Colonic mucosa (tissue), 4 donors: ENCODE measurements at regions of chr13 and their contacts with region 1.

Region 1: GRCh38 chr13:75864718-75865117 is 228.6 kb downstream of the LMO7 start:
- DNase-seq: no peak
- H3K4me3 ChIP-seq: no peak overlapping the region
- H3K27ac ChIP-seq: no peak overlapping the region
- H3K4me1 ChIP-seq: no peaks in the 10 kb centered on the region
- H3K27me3 ChIP-seq: no peaks in the 10 kb centered on the region
- CTCF ChIP-seq: no peak

Region 2: DNA sequence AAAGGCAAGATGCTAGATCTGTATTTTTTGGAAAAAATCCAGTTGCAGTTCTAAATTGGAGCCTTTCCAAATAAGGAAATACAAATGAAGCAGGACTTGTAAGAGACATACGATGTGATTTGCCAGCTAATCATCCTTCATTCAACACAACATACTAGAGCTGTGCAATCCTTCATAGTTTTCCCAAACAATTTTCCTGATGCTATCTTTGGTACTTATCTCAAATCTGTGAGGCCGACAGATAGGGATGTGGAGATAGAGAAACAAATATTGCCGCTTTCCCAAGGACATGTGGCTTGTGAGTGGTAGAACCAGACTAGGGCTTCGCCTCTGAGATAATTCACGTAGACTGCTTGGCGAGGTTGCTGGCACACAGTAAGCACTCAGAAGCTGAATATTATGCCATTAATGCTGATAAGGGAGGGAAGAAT is 52.0 kb before region 1 on chr13:
- intact Hi-C with region 1: loop called (anchors 10 kb)
- DNase-seq: no peak
- H3K4me3 ChIP-seq: no peak overlapping the region
- H3K27ac ChIP-seq: no peak overlapping the region
- H3K4me1 ChIP-seq: no peaks in the 10 kb centered on the region
- H3K27me3 ChIP-seq: no peaks in the 10 kb centered on the region
- CTCF ChIP-seq: no peak

Region 3: DNA sequence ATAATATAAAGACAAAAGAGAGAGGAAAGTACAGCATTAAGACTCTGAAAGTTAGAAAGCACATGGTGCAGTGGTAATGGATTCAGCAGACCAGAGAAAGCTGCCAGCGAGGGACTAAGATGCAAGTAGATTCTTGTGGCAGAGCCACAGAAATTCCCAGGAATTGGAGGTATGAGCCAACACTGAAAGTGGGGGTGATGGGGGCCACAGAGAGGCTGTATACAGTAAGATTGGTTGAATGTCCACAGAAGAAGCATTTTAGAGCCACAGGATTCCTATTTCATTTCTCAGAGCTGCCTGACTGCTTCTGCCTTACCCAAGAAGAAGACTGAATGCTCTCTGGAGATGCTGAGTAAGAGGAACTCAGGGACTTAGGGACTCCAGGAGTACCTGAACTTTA is 66.4 kb after region 1 on chr13:
- intact Hi-C with region 1: no loop called
- DNase-seq: no peak
- H3K4me3 ChIP-seq: no peak overlapping the region
- H3K27ac ChIP-seq: no peak overlapping the region
- H3K4me1 ChIP-seq: no peaks in the 10 kb centered on the region
- H3K27me3 ChIP-seq: no peaks in the 10 kb centered on the region
- CTCF ChIP-seq: no peak

Region 4: GRCh38 chr13:76086729-76087128 is 222.0 kb after region 1 on chr13:
- intact Hi-C with region 1: no loop called
- DNase-seq: no peak
- H3K4me3 ChIP-seq: no peak overlapping the region
- H3K27ac ChIP-seq: no peak overlapping the region
- H3K4me1 ChIP-seq: no peaks in the 10 kb centered on the region
- H3K27me3 ChIP-seq: no peaks in the 10 kb centered on the region
- CTCF ChIP-seq: no peak